GM12878 (cell line): ENCODE measurements at regions of chr11 and their contacts with region 1.

Region 1: GRCh38 chr11:31887180-31887579 is 76.1 kb upstream of the PAX6 start:
- DNase-seq: no peak
- ATAC-seq: no peak
- H3K4me3 ChIP-seq: no peak overlapping the region
- H3K27ac ChIP-seq: no peak overlapping the region
- H3K4me1 ChIP-seq: no peaks in the 10 kb centered on the region
- H3K27me3 ChIP-seq: peaks cover 3 to 4% of the 10 kb centered on the region in 2 experiments; a peak in 3 of 4 replicates
- CTCF ChIP-seq: peak in 2 of 3 experiments; percentile 5 to 29; a peak in 2 of 6 replicates
- EP300 ChIP-seq: no peak
- POLR2A ChIP-seq: no peak
- RAD21 ChIP-seq: no peak

Region 2: DNA sequence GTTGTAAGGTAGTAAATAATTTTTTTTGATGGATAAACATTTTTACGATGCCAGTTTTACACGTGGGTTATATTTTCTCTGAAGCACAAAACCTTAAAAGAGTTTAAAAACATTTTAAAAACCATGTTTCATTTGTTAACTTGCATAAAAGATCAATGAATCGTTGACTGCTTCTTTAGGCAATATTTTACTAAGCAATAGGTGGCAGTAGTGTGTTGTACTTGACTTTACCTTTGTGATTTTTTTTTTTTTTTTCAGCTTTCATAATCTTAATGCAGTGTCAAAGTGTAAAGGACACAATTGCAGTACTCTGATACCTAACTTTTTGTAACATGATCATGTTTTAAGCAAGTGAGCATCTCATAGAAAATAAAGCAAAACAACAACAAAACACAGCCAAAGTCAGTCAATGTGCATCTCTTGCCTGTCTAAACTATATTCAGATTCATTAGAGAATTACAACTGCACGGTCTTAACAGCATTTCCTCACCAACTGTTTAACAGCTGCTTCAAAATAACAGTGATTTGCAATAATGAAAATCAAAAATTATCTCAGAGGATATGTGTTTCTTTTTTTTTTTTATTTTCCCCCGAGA is 489.8 kb before region 1 on chr11:
- CTCF ChIA-PET with region 1: no interaction called
- POLR2A ChIA-PET with region 1: no interaction called
- RAD21 ChIA-PET with region 1: interaction called, 3 read pairs
- SMC1A ChIA-PET with region 1: no interaction called
- in situ Hi-C with region 1: no loop called
- intact Hi-C with region 1: loop called (anchors 5 kb)
- DNase-seq: no peak
- ATAC-seq: peak; percentile 70
- H3K4me3 ChIP-seq: no peak overlapping the region
- H3K27ac ChIP-seq: no peak overlapping the region
- H3K4me1 ChIP-seq: no peaks in the 10 kb centered on the region
- H3K27me3 ChIP-seq: no peaks in the 10 kb centered on the region
- CTCF ChIP-seq: peak; percentile 43 to 72 (median 55); a peak in 5 of 6 replicates
- EP300 ChIP-seq: no peak
- POLR2A ChIP-seq: no peak
- RAD21 ChIP-seq: peak; percentile 78

Region 3: GRCh38 chr11:31529701-31530100 is 357.5 kb before region 1 on chr11:
- CTCF ChIA-PET with region 1: no interaction called
- POLR2A ChIA-PET with region 1: no interaction called
- RAD21 ChIA-PET with region 1: no interaction called
- SMC1A ChIA-PET with region 1: no interaction called
- in situ Hi-C with region 1: no loop called
- intact Hi-C with region 1: no loop called
- DNase-seq: no peak
- ATAC-seq: peak; percentile 91
- H3K4me3 ChIP-seq: no peak overlapping the region
- H3K27ac ChIP-seq: no peak overlapping the region
- H3K4me1 ChIP-seq: no peaks in the 10 kb centered on the region
- H3K27me3 ChIP-seq: no peaks in the 10 kb centered on the region
- CTCF ChIP-seq: no peak
- EP300 ChIP-seq: no peak
- POLR2A ChIP-seq: no peak
- RAD21 ChIP-seq: no peak